ENCODE measurements at regions of chr13 and their contacts with region 1.

Region 1: DNA sequence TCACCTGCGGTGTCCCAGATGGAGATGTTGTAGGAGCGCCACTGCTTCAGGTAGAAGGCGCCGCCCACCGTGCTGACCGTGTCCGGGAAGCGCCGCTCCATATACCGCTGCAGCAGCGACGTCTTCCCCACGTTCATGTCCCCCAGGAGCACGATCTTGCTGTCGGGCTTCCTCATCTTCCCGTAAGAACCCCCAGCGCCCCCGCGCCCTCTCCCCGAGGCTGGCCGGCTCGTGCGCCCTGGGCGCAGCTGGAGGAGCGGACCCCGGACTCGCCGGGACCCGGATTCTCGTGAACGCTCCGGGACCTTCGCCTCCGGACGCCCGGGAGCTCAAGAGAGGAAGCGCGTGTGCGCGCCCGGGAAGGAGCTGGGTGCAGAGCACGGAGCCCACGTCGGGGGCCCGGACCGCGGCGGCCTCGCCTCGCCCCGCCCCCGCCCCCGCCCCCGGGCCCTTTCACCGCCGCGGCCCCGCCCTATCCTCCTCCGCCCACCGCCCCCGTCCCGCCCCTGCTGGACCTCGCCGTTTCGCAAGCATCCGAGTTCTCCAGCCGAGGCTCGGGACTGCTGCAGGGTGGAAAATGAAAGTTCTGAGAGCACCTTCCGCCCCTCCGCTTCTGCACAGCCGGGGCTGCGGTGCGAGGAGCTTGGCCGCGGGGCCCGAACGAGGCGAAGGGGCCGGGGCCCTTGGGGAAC is at the start of gene RAB20:
- DNase-seq: peak; percentile 80
- ATAC-seq: peak; percentile 80
- H3K4me3 ChIP-seq: peak within 1 kb of the TSS; percentile 90 to 98 (median 94)
- H3K27ac ChIP-seq: peak within 1 kb of the TSS; percentile 95
- H3K4me1 ChIP-seq: peaks cover 63% of the 10 kb centered on the region
- H3K27me3 ChIP-seq: no peaks in the 10 kb centered on the region; a peak in 1 of 5 replicates
- CTCF ChIP-seq: no peak; the same call in 1 of the 2 replicates
- EP300 ChIP-seq: no peak
- POLR2A ChIP-seq: peak; percentile 65 to 79
- RAD21 ChIP-seq: no peak
- total RNA-seq, gene RAB20: 15.2 and 15.6 TPM in 2 replicates

Region 2: GRCh38 chr13:110491869-110492678 is 69.4 kb before region 1 on chr13:
- CTCF ChIA-PET with region 1: no interaction called
- POLR2A ChIA-PET with region 1: no interaction called
- in situ Hi-C with region 1: no loop called
- intact Hi-C with region 1: loop called (anchors 2 kb)
- DNase-seq: no peak
- ATAC-seq: no peak
- H3K4me3 ChIP-seq: no peak overlapping the region
- H3K27ac ChIP-seq: no peak overlapping the region
- H3K4me1 ChIP-seq: peaks cover 53% of the 10 kb centered on the region
- H3K27me3 ChIP-seq: no peaks in the 10 kb centered on the region
- CTCF ChIP-seq: no peak
- EP300 ChIP-seq: no peak
- POLR2A ChIP-seq: no peak
- RAD21 ChIP-seq: no peak

Region 3: DNA sequence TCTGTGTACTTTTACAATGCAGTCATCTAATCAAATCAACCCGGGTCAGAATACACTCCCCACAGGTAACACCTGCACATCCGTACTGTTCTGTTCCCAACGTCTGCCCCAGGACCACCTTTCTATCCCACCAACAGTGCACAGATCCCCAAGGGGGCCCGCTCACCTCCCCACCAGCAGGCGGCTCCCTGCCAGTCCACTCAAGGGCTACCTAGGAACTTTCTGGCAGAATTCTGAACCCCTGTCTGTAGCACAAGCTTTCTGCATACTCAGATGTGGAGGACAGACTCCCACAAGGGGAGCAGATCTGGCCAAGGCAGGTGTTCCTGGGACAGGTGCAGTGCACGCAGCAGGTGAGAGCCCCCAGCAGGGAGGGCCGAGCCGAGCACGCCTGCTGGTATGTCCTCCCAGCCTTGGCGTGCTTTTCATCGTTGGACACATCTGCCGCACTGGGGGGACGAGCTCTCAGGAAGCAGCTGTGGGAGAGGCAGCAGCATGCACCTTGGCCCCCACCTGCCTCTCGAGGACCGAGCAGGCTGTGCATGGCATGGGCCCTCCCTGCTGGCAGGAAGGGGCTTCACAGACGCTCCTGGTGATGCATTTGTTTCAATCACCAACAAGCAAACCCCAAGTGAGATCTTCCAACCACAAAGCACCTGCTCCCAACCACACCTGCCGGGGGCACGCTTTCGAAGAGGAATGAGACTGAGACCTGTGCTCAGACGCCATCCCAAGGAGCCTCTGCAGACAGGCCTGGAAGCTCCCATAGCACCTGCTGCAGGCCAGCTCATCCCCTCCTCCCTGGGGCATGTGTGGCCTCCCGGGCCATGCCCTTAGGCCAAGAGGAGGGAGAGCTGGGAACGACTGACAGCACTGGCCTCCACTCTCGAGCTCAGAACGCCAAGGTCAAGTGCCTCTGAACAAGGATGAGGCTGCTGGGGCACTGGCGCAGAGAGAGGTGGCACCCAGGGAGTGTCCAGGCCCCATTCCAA is 35.9 kb before region 1 on chr13:
- CTCF ChIA-PET with region 1: no interaction called
- POLR2A ChIA-PET with region 1: interaction called, 10 read pairs
- in situ Hi-C with region 1: no loop called
- intact Hi-C with region 1: loop called (anchors 2 kb)
- DNase-seq: no peak
- ATAC-seq: no peak
- H3K4me3 ChIP-seq: no peak overlapping the region
- H3K27ac ChIP-seq: no peak overlapping the region
- H3K4me1 ChIP-seq: peaks cover 42% of the 10 kb centered on the region
- H3K27me3 ChIP-seq: no peaks in the 10 kb centered on the region
- CTCF ChIP-seq: no peak
- EP300 ChIP-seq: no peak
- POLR2A ChIP-seq: no peak
- RAD21 ChIP-seq: no peak

Region 4: DNA sequence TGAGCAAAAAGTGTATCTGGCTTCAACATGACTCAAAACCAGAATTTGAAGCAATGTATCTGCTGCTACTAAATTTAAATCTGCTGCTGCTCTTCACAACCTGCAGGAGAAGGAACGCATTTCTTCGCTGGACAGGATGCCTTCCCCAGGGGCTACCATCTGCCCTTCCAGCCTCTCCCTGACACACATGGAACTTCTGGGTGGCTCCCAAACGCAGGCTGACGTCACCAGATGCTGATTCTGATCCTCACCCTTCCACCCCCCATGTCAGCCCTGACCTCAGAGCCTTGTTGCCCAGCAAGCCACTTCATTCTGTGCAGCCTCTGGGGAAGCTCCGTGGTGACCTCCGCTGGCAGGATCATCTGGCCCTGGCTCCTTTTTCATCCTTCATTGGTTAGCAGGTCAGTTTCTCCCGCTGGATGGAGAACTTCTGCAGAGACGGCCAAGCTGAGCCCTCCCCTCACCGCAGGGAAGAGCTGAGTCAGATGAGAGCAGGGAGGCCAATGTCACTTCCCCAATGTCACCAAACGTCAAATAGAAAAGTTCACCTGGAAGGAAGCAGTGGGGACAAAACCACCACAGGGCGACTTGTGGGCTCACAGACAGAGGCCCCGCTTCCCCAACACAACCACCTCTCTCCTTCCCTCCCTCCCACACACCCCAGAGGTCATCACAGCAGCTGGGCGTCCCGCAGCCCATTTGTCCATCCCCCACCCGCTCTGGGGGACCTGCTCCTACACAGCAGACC is 14.0 kb after region 1 on chr13:
- CTCF ChIA-PET with region 1: no interaction called
- POLR2A ChIA-PET with region 1: interaction called, 20 read pairs
- in situ Hi-C with region 1: no loop called
- intact Hi-C with region 1: loop called (anchors 2 kb)
- DNase-seq: peak; percentile 20
- ATAC-seq: peak; percentile 54
- H3K4me3 ChIP-seq: no peak overlapping the region
- H3K27ac ChIP-seq: peak overlapping the region; percentile 47
- H3K4me1 ChIP-seq: peaks cover 41% of the 10 kb centered on the region
- H3K27me3 ChIP-seq: peaks cover 0 to 6% of the 10 kb centered on the region in 2 experiments; a peak in 1 of 5 replicates
- CTCF ChIP-seq: peak; percentile 72
- EP300 ChIP-seq: no peak
- POLR2A ChIP-seq: no peak
- RAD21 ChIP-seq: no peak

Region 5: DNA sequence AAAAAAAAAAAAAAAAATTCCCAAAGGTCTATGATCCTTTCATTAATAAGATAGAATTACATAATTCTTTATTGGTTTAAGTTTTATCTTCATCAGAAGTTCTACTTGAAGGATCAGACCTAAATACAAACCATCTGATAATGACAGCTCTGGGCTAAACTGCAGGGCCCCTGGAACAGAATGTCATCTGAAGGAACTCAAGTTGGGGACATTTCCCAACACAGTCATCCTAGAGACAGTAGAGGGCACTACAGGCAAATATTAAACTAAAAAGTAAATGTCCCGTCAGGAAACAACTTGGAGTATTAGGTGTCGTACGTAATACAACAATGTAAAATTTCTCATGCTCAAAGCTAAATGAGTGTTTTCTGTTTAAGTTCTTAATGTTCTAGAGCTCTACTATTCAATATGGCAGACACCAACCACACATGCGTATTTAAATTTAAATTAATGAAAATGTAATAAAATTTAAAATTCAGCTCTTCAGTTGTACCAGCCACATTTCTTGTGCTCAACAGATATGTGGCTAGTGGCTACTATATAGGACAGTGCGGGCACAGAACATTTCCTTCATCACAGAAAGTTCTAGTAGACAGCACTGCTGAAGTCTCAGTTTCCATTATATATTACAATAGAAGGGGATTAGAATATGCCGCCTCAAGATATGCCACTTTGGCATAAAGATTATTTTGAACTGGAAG is 32.1 kb after region 1 on chr13:
- CTCF ChIA-PET with region 1: no interaction called
- POLR2A ChIA-PET with region 1: interaction called, 4 read pairs
- in situ Hi-C with region 1: no loop called
- intact Hi-C with region 1: loop called (anchors 2 kb)
- DNase-seq: peak; percentile 65
- ATAC-seq: peak; percentile 89
- H3K4me3 ChIP-seq: no peak overlapping the region
- H3K27ac ChIP-seq: no peak overlapping the region
- H3K4me1 ChIP-seq: peaks cover 19% of the 10 kb centered on the region
- H3K27me3 ChIP-seq: no peaks in the 10 kb centered on the region
- CTCF ChIP-seq: peak; percentile 75
- EP300 ChIP-seq: no peak
- POLR2A ChIP-seq: no peak
- RAD21 ChIP-seq: peak; percentile 36; the same call in 1 of the 2 replicates

Region 6: GRCh38 chr13:110615322-110616102 is 54.0 kb after region 1 on chr13 and contains the start of gene NAXD:
- CTCF ChIA-PET with region 1: no interaction called
- POLR2A ChIA-PET with region 1: interaction called, 5 read pairs
- in situ Hi-C with region 1: no loop called
- intact Hi-C with region 1: loop called (anchors 2 kb)
- DNase-seq: peak; percentile 89
- ATAC-seq: peak; percentile 95
- H3K4me3 ChIP-seq: peak within 1 kb of the TSS; percentile 96 to 97 (median 97)
- H3K27ac ChIP-seq: peak within 1 kb of the TSS; percentile 83
- H3K4me1 ChIP-seq: peaks cover 62% of the 10 kb centered on the region
- H3K27me3 ChIP-seq: peaks cover 1 to 13% of the 10 kb centered on the region in 2 experiments; a peak in 3 of 5 replicates
- CTCF ChIP-seq: no peak; the same call in 1 of the 2 replicates
- EP300 ChIP-seq: 0 out of 4 replicates have a peak, but pooled peaks of 1 of the 2 experiments have one; percentile 15
- POLR2A ChIP-seq: peak; percentile 73 to 83
- RAD21 ChIP-seq: peak; percentile 19; the same call in 1 of the 2 replicates
- total RNA-seq, gene NAXD: 18.5 and 19.0 TPM in 2 replicates

Region 7: GRCh38 chr13:110665491-110666254 is 104.2 kb after region 1 on chr13:
- CTCF ChIA-PET with region 1: no interaction called
- POLR2A ChIA-PET with region 1: no interaction called
- in situ Hi-C with region 1: no loop called
- intact Hi-C with region 1: no loop called
- DNase-seq: no peak
- ATAC-seq: no peak
- H3K4me3 ChIP-seq: no peak overlapping the region
- H3K27ac ChIP-seq: no peak overlapping the region
- H3K4me1 ChIP-seq: no peaks in the 10 kb centered on the region
- H3K27me3 ChIP-seq: no peaks in the 10 kb centered on the region
- CTCF ChIP-seq: no peak
- EP300 ChIP-seq: no peak
- POLR2A ChIP-seq: no peak
- RAD21 ChIP-seq: no peak

Region 8: GRCh38 chr13:110902370-110902769 is 340.9 kb after region 1 on chr13:
- CTCF ChIA-PET with region 1: no interaction called
- POLR2A ChIA-PET with region 1: no interaction called
- in situ Hi-C with region 1: no loop called
- intact Hi-C with region 1: no loop called
- DNase-seq: no peak
- ATAC-seq: no peak
- H3K4me3 ChIP-seq: no peak overlapping the region
- H3K27ac ChIP-seq: no peak overlapping the region
- H3K4me1 ChIP-seq: peaks cover 10% of the 10 kb centered on the region
- H3K27me3 ChIP-seq: no peaks in the 10 kb centered on the region
- CTCF ChIP-seq: no peak
- EP300 ChIP-seq: no peak
- POLR2A ChIP-seq: no peak
- RAD21 ChIP-seq: no peak

Measured in HepG2 (cell line).